ENCODE measurements at regions of chr2 and their contacts with region 1.

Region 1: DNA sequence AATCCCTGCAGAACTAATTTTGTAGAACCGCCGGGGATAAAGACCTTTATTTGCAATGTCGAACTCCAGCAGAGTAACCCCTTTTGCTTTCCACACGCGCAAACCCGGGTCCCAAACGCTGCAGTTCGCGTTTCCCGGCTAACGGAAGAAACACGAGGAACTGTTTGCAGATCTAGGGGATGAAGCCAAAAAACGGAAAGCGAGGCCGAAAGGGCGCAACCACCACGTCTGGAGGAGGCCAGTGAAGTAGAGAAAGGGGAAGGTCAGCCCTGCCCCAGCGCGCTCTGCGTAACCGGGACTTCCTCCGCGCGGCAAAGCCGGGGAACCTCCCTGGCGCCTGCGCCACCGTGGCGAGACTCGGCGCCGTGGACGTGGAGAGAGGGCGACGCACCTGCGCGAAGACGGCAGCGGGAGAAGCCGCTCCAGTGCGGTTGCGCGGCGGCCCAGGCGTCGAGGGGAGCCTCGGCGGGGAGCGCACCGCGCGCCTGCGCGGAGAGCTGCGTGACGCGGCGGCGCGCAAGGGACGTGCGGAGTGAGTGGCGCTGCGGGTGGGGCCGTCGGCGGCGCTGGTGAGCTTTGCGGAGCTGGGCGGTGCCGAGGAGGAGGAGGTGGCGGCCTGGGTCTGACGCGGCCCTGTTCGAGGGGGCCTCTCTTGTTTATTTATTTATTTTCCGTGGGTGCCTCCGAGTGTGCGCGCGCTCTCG is at the start of gene PPP1CB:
- DNase-seq: peak; percentile 96 to 99 (median 99)
- H3K4me3 ChIP-seq: peak within 1 kb of the TSS; percentile 74 to 97
- H3K4me3 Mint-ChIP-seq: peak within 1 kb of the TSS; percentile 90 to 99 (median 96)
- H3K27ac ChIP-seq: peak within 1 kb of the TSS; percentile 94
- H3K27ac Mint-ChIP-seq: peak within 1 kb of the TSS; percentile 97 to 99 (median 99)
- H3K4me1 ChIP-seq: peaks cover 59% of the 10 kb centered on the region
- H3K4me1 Mint-ChIP-seq: peaks cover 38 to 82% (median 57%) of the 10 kb centered on the region in 4 donors
- H3K27me3 ChIP-seq: no peaks in the 10 kb centered on the region
- H3K27me3 Mint-ChIP-seq: no peaks in the 10 kb centered on the region
- total RNA-seq, gene PPP1CB: 225 to 231 TPM

Region 2: DNA sequence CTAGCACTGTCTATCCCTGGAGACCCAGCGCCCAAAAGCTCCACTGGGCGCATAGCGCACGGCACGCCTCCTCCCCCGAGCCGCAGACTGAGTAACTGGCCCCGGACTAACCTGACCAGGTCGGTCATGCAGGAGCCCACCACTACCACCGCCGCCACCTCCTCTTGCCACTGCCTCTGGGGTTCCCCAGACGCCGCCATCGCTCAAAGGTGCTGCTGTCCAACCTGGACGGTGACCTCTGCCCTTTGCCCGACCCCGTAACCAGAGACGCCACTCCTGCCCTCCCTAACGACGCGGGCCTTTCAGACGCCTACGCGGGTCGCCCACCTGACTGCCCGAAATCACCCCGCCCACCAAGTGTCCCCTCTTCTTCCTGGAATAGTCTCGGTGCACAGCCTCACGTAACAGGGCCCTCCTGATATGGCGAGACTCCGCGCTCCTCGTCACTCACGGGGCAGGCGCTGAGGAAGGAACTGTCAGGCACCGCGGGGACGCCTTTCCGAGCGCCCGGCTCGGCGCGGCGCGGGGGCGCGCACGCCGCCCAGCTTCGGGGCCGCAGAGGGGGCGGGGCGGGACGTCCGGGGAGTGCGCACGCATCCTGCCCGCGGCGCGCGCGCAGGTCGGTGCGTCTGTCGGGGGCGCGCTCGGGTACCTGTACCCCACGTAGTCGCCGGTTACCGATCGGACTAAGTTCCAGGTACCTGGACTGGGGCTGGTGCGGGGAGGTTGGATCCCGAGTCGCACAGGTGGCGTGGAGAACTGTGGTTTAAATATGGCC is 861.1 kb before region 1 on chr2 and contains the starts of genes BABAM2 and RBKS:
- CTCF ChIA-PET with region 1: no interaction called
- POLR2A ChIA-PET with region 1: no interaction called
- intact Hi-C with region 1: loop called (anchors 10 kb)
- DNase-seq: peak; percentile 93 to 95 (median 93)
- H3K4me3 ChIP-seq: peak within 1 kb of the TSS; percentile 92 to 99
- H3K4me3 Mint-ChIP-seq: peak within 1 kb of the TSS; percentile 93 to 100 (median 98)
- H3K27ac ChIP-seq: peak within 1 kb of the TSS; percentile 98
- H3K27ac Mint-ChIP-seq: peak within 1 kb of the TSS; percentile 100
- H3K4me1 ChIP-seq: peaks cover 45% of the 10 kb centered on the region
- H3K4me1 Mint-ChIP-seq: peaks cover 24 to 57% (median 47%) of the 10 kb centered on the region in 4 donors
- H3K27me3 ChIP-seq: no peaks in the 10 kb centered on the region
- H3K27me3 Mint-ChIP-seq: peaks cover 1 to 5% of the 10 kb centered on the region in 2 donors
- total RNA-seq, gene BABAM2: 37.3 to 41.2 TPM
- total RNA-seq, gene RBKS: 1.2 to 1.7 TPM

Region 3: GRCh38 chr2:28583899-28584553 is 167.4 kb before region 1 on chr2:
- CTCF ChIA-PET with region 1: interaction called, 6 read pairs
- POLR2A ChIA-PET with region 1: interaction called, 24 read pairs
- intact Hi-C with region 1: no loop called
- DNase-seq: peak in 1 of 5 donors; percentile 45
- H3K4me3 ChIP-seq: no peak overlapping the region
- H3K4me3 Mint-ChIP-seq: no peak overlapping the region
- H3K27ac ChIP-seq: no peak overlapping the region
- H3K27ac Mint-ChIP-seq: peak overlapping the region in 1 of 7 donors; percentile 81
- H3K4me1 ChIP-seq: peaks cover 28% of the 10 kb centered on the region
- H3K4me1 Mint-ChIP-seq: peaks cover 16 to 37% (median 25%) of the 10 kb centered on the region in 4 donors
- H3K27me3 ChIP-seq: no peaks in the 10 kb centered on the region
- H3K27me3 Mint-ChIP-seq: no peaks in the 10 kb centered on the region

Region 4: DNA sequence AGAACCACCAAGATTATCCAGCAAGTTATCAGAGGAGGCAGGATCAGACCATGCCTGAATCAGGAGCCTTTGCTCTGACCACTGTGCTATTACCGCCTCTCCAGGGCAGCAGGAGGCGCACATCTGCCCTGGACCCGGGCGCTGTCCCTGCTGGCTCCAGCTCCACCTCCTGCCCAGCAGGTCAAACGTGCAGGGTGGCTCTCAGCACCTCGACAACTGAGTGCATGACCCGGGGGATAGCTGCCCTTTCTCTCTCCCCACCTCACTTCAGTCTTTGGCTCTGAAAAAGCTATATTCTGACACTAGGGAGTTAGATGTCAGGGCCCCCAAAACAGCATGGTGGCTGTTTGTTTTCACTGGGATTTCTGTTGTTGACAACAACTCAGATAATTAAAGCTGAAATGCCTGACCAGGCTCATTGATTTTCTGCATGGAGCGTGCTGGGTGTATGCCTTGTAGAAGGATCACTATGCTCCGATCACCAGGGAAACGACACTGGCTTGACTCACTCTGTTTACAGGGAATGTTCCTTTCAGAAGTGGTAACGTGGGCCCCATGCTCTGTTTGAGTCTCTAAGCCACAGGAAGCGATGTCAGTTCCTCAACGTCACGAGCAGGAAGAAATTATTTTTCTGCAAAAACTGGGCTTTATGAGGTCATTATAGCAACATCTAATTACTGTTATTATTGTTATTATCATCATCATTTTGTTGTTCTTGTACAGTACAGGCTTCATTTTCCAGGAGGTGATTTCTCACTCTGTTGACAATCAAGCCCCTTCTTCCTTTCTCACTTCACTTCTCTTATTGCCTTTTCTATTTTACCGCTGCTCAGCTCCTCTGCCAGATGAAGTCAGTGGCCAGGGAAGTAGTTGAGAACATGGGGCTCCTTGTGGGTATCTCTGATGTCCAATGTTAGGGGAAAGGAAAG is 130.0 kb before region 1 on chr2:
- CTCF ChIA-PET with region 1: interaction called, 5 read pairs
- POLR2A ChIA-PET with region 1: interaction called, 97 read pairs
- intact Hi-C with region 1: loop called (anchors 1 kb)
- DNase-seq: peak; percentile 92 to 97 (median 95)
- H3K4me3 ChIP-seq: peak overlapping the region in 1 of 2 donors; percentile 39
- H3K4me3 Mint-ChIP-seq: peak overlapping the region; percentile 65 to 84 (median 76)
- H3K27ac ChIP-seq: peak overlapping the region; percentile 97
- H3K27ac Mint-ChIP-seq: peak overlapping the region; percentile 98 to 100 (median 100)
- H3K4me1 ChIP-seq: peaks cover 98% of the 10 kb centered on the region
- H3K4me1 Mint-ChIP-seq: peaks cover 78 to 98% (median 80%) of the 10 kb centered on the region in 4 donors
- H3K27me3 ChIP-seq: no peaks in the 10 kb centered on the region
- H3K27me3 Mint-ChIP-seq: no peaks in the 10 kb centered on the region

Region 5: GRCh38 chr2:28674062-28674712 is 77.2 kb before region 1 on chr2:
- CTCF ChIA-PET with region 1: no interaction called
- POLR2A ChIA-PET with region 1: no interaction called
- intact Hi-C with region 1: no loop called
- DNase-seq: no peak
- H3K4me3 ChIP-seq: no peak overlapping the region
- H3K4me3 Mint-ChIP-seq: no peak overlapping the region
- H3K27ac ChIP-seq: no peak overlapping the region
- H3K27ac Mint-ChIP-seq: peak overlapping the region in 1 of 7 donors; percentile 42
- H3K4me1 ChIP-seq: no peaks in the 10 kb centered on the region
- H3K4me1 Mint-ChIP-seq: peaks cover 0 to 4% (median 1%) of the 10 kb centered on the region in 4 donors
- H3K27me3 ChIP-seq: no peaks in the 10 kb centered on the region
- H3K27me3 Mint-ChIP-seq: no peaks in the 10 kb centered on the region

Region 6: DNA sequence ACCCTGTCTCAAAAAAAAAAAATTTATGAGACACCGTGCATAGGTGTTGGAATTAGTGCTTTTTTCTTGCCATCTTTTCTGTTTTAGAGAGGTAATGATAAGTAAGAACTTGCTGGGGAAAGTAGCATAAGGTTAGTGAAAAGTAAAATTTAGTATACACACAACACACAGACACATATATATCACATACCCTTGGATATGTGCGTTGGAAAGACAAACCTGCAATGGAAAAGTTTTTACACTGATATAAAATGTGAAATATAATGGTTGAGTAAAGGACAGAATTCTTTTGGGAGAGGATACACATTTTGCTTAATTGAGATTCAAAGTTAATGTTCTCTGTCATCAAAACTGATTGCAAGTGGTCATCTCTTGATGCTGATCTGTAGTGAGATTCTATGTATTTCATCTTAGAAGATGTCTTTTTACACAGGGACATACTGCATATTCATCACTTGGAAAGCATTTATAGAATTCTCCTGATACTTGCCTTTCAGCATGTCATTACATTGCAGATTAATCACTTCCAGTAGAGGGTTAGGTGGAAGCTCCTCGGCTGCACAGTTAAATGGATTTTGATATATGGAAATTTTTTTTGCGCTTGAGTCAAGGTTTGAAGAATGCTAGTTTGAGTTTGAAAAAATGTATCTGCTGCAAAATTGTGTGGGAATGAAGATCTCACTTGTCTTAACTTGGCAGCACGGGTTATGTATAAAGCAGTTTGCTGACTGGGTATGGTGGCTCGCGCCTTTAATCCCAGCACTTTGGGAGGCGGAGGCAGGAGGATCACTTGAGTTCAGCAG is 13.7 kb after region 1 on chr2:
- CTCF ChIA-PET with region 1: no interaction called
- POLR2A ChIA-PET with region 1: interaction called, 9 read pairs
- intact Hi-C with region 1: loop called (anchors 2 kb)
- DNase-seq: no peak
- H3K4me3 ChIP-seq: no peak overlapping the region
- H3K4me3 Mint-ChIP-seq: peak overlapping the region in 7 of 8 donors; percentile 17 to 73 (median 27)
- H3K27ac ChIP-seq: no peak overlapping the region
- H3K27ac Mint-ChIP-seq: peak overlapping the region in 5 of 7 donors; percentile 22 to 77 (median 54)
- H3K4me1 ChIP-seq: peaks cover 97% of the 10 kb centered on the region
- H3K4me1 Mint-ChIP-seq: peaks cover 54 to 99% (median 74%) of the 10 kb centered on the region in 4 donors
- H3K27me3 ChIP-seq: no peaks in the 10 kb centered on the region
- H3K27me3 Mint-ChIP-seq: no peaks in the 10 kb centered on the region

Region 7: GRCh38 chr2:28870146-28870891 is 118.9 kb after region 1 on chr2 and contains the start of gene TRMT61B:
- CTCF ChIA-PET with region 1: no interaction called
- POLR2A ChIA-PET with region 1: interaction called, 9 read pairs
- intact Hi-C with region 1: loop called (anchors 1 kb)
- DNase-seq: peak; percentile 95 to 96 (median 96)
- H3K4me3 ChIP-seq: peak within 1 kb of the TSS; percentile 99
- H3K4me3 Mint-ChIP-seq: peak within 1 kb of the TSS; percentile 93 to 100 (median 96)
- H3K27ac ChIP-seq: peak within 1 kb of the TSS; percentile 95
- H3K27ac Mint-ChIP-seq: peak within 1 kb of the TSS; percentile 98 to 100 (median 100)
- H3K4me1 ChIP-seq: peaks cover 39% of the 10 kb centered on the region
- H3K4me1 Mint-ChIP-seq: peaks cover 20 to 46% (median 31%) of the 10 kb centered on the region in 4 donors
- H3K27me3 ChIP-seq: no peaks in the 10 kb centered on the region
- H3K27me3 Mint-ChIP-seq: peaks cover 0 to 2% of the 10 kb centered on the region in 2 donors
- total RNA-seq, gene TRMT61B: 17.4 TPM

Region 8: GRCh38 chr2:30146438-30147147 is 1395.2 kb after region 1 on chr2 and contains the start of gene YPEL5:
- CTCF ChIA-PET with region 1: no interaction called
- POLR2A ChIA-PET with region 1: no interaction called
- intact Hi-C with region 1: loop called (anchors 5 kb)
- DNase-seq: peak; percentile 99 to 100 (median 100)
- H3K4me3 ChIP-seq: peak within 1 kb of the TSS; percentile 49 to 78
- H3K4me3 Mint-ChIP-seq: peak within 1 kb of the TSS; percentile 86 to 94 (median 88)
- H3K27ac ChIP-seq: peak within 1 kb of the TSS; percentile 99
- H3K27ac Mint-ChIP-seq: peak within 1 kb of the TSS; percentile 98 to 100 (median 100)
- H3K4me1 ChIP-seq: peaks cover 54% of the 10 kb centered on the region
- H3K4me1 Mint-ChIP-seq: peaks cover 36 to 73% (median 43%) of the 10 kb centered on the region in 4 donors
- H3K27me3 ChIP-seq: no peaks in the 10 kb centered on the region
- H3K27me3 Mint-ChIP-seq: no peaks in the 10 kb centered on the region
- total RNA-seq, gene YPEL5: 81.5 to 88.4 TPM

Measured in CD4-positive, alpha-beta memory T cell (primary cell).